Colonic mucosa (tissue), 4 donors: ENCODE measurements at regions of chr2 and their contacts with region 1.

Region 1: GRCh38 chr2:116747103-116747502 is 1067.4 kb upstream of the DDX18 start:
- DNase-seq: no peak
- H3K4me3 ChIP-seq: no peak overlapping the region
- H3K27ac ChIP-seq: no peak overlapping the region
- H3K4me1 ChIP-seq: no peaks in the 10 kb centered on the region
- H3K27me3 ChIP-seq: no peaks in the 10 kb centered on the region
- CTCF ChIP-seq: peak; percentile 36

Region 2: DNA sequence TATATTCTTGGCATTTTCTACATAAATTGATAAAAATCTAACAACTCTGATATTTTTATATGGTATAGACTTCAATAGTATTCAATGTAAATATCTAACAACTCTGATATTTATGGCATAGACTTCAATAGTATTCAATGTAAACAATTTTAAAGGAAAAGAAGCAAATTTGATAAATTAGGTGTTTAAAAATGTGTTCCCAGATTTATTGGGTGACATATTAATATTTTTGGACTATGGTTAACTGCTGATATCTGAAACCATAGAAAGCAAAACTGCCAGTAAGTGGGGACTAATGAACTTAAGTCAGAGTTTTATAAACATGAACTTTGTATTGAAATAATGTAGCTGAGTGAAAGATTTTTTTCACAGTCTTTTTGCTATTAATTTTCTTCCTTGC is 508.6 kb before region 1 on chr2:
- intact Hi-C with region 1: no loop called
- DNase-seq: no peak
- H3K4me3 ChIP-seq: no peak overlapping the region
- H3K27ac ChIP-seq: no peak overlapping the region
- H3K4me1 ChIP-seq: no peaks in the 10 kb centered on the region
- H3K27me3 ChIP-seq: no peaks in the 10 kb centered on the region
- CTCF ChIP-seq: no peak

Region 3: DNA sequence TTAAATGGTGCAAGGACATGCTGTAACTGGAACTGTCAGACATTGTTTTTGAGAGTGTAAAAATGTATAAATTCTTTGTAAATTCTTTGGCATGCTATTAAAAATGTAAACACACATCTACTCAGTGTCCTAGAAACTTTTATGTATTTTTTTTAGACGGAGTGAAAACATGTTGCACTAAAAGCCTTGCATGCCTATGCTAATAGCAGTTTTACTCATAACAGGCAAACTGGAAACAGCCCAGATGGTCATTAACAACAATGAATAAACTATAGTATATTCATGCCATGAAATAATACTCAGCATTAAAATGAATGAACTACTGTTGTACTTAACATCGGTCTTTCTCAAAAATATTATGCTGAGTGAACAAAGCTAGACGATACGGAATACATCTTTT is 112.6 kb after region 1 on chr2:
- intact Hi-C with region 1: no loop called
- DNase-seq: no peak
- H3K4me3 ChIP-seq: no peak overlapping the region
- H3K27ac ChIP-seq: no peak overlapping the region
- H3K4me1 ChIP-seq: no peaks in the 10 kb centered on the region
- H3K27me3 ChIP-seq: no peaks in the 10 kb centered on the region
- CTCF ChIP-seq: no peak

Region 4: GRCh38 chr2:116952254-116952653 is 205.2 kb after region 1 on chr2:
- intact Hi-C with region 1: loop called (anchors 10 kb)
- DNase-seq: peak; percentile 17
- H3K4me3 ChIP-seq: no peak overlapping the region
- H3K27ac ChIP-seq: no peak overlapping the region
- H3K4me1 ChIP-seq: no peaks in the 10 kb centered on the region
- H3K27me3 ChIP-seq: no peaks in the 10 kb centered on the region
- CTCF ChIP-seq: peak; percentile 38

Region 5: GRCh38 chr2:117027646-117028045 is 280.5 kb after region 1 on chr2:
- intact Hi-C with region 1: no loop called
- DNase-seq: no peak
- H3K4me3 ChIP-seq: no peak overlapping the region
- H3K27ac ChIP-seq: no peak overlapping the region
- H3K4me1 ChIP-seq: no peaks in the 10 kb centered on the region
- H3K27me3 ChIP-seq: no peaks in the 10 kb centered on the region
- CTCF ChIP-seq: no peak